ENCODE measurements at regions of chr3 and their contacts with region 1.

Region 1: DNA sequence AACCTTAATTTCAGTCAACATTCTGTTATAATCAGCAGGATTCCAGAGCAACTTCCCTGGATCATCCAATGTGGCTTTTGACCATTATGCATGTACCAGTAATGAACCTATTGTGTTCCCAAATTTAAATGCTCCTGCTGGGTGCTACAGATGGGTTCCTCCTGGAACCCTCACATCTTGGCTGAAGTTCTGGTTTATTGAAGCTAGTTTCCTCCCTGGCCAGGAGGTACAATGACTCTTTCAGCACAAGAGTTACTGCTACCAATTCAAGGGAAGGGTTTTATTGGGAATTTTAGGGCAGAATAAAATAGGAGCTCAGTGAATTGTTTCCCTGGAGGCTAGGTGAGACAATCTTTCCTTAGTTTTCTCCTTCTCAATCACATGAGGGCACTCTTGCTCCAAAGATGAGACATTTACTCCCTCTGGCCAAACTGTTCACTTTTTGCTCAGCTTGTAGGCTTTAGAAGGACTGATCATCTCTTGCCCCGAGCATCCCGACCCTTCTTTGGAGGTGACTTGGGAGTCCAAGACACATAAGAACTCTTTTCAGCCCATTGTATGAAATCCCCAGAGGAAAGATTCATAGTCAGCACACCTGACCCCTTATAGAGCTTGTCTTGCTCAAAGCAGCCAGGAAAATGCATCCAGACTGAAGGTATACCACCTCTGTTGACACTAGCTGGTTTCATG is 8.8 kb upstream of the NPHP3 start:
- DNase-seq: no peak
- ATAC-seq: peak; percentile 54 to 77
- H3K4me3 ChIP-seq: no peak overlapping the region
- H3K27ac ChIP-seq: no peak overlapping the region
- H3K4me1 ChIP-seq: peaks cover 0 to 5% of the 10 kb centered on the region in 2 donors
- H3K27me3 ChIP-seq: no peaks in the 10 kb centered on the region
- CTCF ChIP-seq: peak in 4 of 5 experiments; percentile 14 to 41 (median 24)
- POLR2A ChIP-seq: no peak

Region 2: GRCh38 chr3:132911736-132912414 is 180.8 kb after region 1 on chr3:
- in situ Hi-C with region 1: no loop called
- intact Hi-C with region 1: no loop called
- DNase-seq: no peak
- ATAC-seq: no peak
- H3K4me3 ChIP-seq: no peak overlapping the region
- H3K27ac ChIP-seq: no peak overlapping the region
- H3K4me1 ChIP-seq: no peaks in the 10 kb centered on the region
- H3K27me3 ChIP-seq: no peaks in the 10 kb centered on the region
- CTCF ChIP-seq: no peak
- POLR2A ChIP-seq: no peak

Region 3: GRCh38 chr3:133377396-133377795 is 646.4 kb after region 1 on chr3:
- in situ Hi-C with region 1: loop called in 2 of 4 experiments (anchors 5 kb)
- intact Hi-C with region 1: no loop called
- DNase-seq: no peak
- ATAC-seq: peak in 1 of 2 donors; percentile 39
- H3K4me3 ChIP-seq: no peak overlapping the region
- H3K27ac ChIP-seq: no peak overlapping the region
- H3K4me1 ChIP-seq: peaks cover 2 to 6% of the 10 kb centered on the region in 2 donors
- H3K27me3 ChIP-seq: no peaks in the 10 kb centered on the region
- CTCF ChIP-seq: peak in 2 of 5 experiments; percentile 21 to 31
- POLR2A ChIP-seq: no peak

Region 4: DNA sequence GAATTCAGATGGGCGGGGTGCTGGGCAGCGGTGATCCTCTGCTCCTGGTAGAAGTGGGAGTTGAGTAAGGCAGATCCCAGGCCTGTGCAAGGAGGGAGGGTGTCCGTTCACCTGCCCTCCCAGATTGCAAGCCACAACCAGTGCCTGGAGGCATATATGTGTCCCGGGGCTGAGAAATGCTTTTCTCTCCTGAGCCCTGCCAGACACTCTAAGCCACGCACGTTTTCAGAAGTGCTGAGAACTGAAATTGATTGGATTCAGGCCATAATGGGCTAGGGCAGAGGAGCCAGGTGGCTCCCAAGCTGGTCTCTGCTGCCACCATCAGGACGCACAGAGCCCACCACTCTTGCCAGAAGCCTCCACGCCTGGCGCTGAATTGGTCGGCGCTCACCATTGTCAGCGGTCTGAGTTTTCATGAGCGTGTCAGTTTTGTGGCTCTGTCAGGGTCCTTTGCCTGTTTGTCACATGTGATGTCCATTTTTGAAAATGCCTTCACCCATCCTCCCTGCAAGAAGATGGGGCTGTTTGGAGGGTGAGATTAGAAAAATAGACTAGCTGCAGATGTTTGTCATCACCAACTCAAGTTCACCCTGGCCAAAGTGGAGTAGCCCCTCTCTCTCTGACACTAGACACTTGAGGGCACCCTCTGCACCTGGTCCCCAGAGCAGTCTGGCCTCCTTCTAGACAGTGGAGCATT is 653.4 kb after region 1 on chr3:
- in situ Hi-C with region 1: loop called in 3 of 4 experiments (anchors 5 kb)
- intact Hi-C with region 1: loop called (anchors 1 kb)
- DNase-seq: peak in 1 of 2 donors; percentile 35
- ATAC-seq: peak; percentile 81 to 86
- H3K4me3 ChIP-seq: no peak overlapping the region
- H3K27ac ChIP-seq: no peak overlapping the region
- H3K4me1 ChIP-seq: peaks cover 6 to 23% of the 10 kb centered on the region in 2 donors
- H3K27me3 ChIP-seq: no peaks in the 10 kb centered on the region
- CTCF ChIP-seq: peak; percentile 62 to 89 (median 81)
- POLR2A ChIP-seq: no peak

Region 5: GRCh38 chr3:133426721-133427120 is 695.7 kb after region 1 on chr3:
- in situ Hi-C with region 1: loop called in 3 of 4 experiments (anchors 5 to 10 kb)
- intact Hi-C with region 1: loop called (anchors 1 kb)
- DNase-seq: no peak
- ATAC-seq: no peak
- H3K4me3 ChIP-seq: no peak overlapping the region
- H3K27ac ChIP-seq: no peak overlapping the region
- H3K4me1 ChIP-seq: peaks cover 0 to 3% of the 10 kb centered on the region in 2 donors
- H3K27me3 ChIP-seq: no peaks in the 10 kb centered on the region
- CTCF ChIP-seq: no peak
- POLR2A ChIP-seq: no peak